Activated naive CD4-positive, alpha-beta T cell treated with anti-CD3 and anti-CD28 coated beads for 36 hours (primary cell): ENCODE measurements at regions of chr11 and their contacts with region 1.

Region 1: DNA sequence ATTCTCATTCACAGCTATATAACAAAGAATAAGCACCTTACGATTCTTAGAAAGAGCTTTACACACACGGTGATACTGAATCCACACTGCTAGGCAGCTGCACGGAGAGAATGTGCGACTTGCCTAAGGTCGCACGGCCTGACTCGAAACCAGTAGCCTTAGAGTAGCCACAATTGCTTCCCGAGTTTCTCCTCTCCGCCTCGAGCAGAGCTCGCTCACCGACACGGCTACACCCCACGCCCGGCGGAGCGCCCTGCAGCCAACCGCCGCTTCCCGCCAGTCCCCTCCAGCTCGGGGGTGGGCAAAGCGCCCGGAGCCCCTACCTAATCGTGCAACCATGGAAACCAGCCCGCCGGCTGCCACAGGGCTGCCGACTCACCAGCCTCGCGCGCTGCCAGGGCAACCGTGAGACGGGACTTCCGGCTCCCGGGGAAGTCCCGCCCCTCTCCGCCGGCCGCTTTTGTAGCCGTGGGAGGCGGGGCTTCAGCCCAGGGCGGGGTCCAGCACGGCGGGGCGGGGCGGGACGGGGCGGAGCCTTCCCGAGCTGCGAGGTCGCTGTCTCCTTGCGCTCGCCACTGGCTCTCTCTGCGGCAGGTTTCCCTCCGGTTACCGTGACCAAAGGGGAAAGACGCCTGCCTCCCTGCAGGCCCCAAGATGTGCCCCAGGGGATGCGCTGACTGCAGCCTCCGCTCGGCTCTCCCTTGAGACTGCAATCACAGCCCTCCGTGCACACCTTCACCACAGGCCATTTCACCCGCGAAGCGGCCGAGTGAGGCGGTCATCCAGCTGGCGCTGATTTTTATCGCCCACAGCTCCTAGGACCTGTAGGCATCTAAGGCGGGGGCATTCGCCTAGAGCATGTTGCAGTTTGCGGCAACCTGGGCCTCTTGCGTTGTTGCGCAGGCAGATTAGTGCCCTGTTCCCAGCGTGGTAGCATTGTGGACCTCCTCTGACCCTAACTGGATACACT is 1.1 kb downstream of the BSCL2 start:
- DNase-seq: peak; percentile 95
- H3K4me3 Mint-ChIP-seq: peak overlapping the region; percentile 88
- H3K27ac Mint-ChIP-seq: peak overlapping the region; percentile 24
- H3K4me1 Mint-ChIP-seq: peaks cover 40% of the 10 kb centered on the region
- H3K27me3 Mint-ChIP-seq: no peaks in the 10 kb centered on the region

Region 2: DNA sequence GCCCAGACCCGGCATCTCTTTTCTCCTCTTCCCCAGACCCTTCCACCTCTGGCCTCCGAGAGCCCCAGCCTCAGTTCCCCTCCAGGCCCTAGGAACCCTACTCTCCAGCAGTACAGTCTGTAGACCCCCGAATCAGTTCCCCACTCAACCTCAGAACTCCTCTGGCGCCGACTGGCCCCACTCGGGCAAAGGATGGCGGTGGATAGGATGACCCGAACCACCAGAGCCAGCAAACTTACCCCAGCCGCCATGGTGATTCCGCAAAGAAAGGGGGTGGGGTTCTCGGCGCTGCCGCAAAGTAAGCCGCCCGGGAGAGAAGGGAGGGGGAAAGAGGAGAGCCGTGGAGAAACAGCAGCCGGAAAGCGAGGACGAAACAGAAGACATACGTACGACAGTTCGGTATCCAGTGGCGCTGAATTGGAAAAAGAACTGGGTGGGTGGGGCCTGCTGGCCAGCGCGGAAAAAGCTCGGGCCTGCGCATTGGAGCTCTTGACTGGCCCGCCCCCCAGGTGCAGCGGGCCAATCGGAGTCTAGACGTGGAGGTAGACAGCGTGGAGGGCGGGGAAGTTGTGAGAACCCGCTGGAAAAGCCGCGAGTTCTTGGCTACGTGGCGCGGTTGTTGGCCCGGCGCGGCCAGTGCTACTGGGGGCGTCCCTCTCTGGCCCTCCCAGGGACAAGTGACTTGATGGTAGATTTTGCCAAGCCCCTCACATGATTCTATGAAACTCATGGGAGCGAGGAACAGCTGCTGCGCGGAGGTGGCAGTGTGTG is 132.4 kb before region 1 on chr11 and contains the start of gene EEF1G:
- CTCF ChIA-PET with region 1: no interaction called
- intact Hi-C with region 1: loop called (anchors 1 kb)
- DNase-seq: peak; percentile 99
- H3K4me3 Mint-ChIP-seq: peak within 1 kb of the TSS; percentile 95
- H3K27ac Mint-ChIP-seq: peak within 1 kb of the TSS; percentile 97
- H3K4me1 Mint-ChIP-seq: peaks cover 44% of the 10 kb centered on the region
- H3K27me3 Mint-ChIP-seq: no peaks in the 10 kb centered on the region
- total RNA-seq, gene EEF1G: 2,282 to 2,440 TPM

Region 3: GRCh38 chr11:62665075-62665598 is 41.0 kb before region 1 on chr11 and contains the starts of genes C11orf98 and CSKMT:
- CTCF ChIA-PET with region 1: interaction called, 5 read pairs
- intact Hi-C with region 1: loop called (anchors 2 kb)
- DNase-seq: peak; percentile 96
- H3K4me3 Mint-ChIP-seq: peak within 1 kb of the TSS; percentile 98
- H3K27ac Mint-ChIP-seq: peak within 1 kb of the TSS; percentile 88
- H3K4me1 Mint-ChIP-seq: peaks cover 42% of the 10 kb centered on the region
- H3K27me3 Mint-ChIP-seq: no peaks in the 10 kb centered on the region
- total RNA-seq, gene C11orf98: 73.5 to 76.5 TPM
- total RNA-seq, gene CSKMT: 35.2 to 44.0 TPM

Region 4: DNA sequence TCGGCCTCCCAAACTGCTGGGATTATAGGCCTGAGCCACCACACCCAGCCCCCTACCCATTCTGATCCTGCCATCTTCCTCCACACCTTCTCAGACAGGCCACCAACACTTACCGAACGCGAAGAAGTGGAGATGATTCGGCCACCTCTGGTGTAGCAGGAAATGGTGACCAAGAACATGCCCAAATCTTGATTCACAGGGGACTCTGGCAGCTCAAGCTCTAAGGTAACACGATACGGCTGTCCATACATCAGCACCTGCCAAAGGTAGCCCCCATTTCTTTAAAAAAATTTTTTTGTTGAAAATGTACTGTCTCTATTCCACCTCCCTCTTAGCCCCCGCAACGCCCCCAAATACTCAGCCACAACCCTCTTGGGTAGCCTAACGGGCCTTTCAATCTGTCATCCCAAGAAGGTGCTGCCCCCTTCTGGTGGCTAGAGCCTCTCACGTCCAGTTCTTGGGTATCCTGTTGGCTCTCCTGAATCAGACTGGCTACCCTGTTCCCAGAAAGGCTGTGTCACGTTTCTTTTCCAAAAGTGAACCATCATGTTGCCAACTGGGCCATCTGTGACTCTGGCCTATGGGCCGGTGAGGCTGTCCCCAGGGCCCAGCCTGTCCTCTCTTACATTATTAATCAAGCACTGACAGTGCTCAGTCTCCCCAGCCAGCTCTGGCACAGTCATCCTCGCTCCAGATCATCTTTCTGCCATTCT is 11.6 kb before region 1 on chr11:
- CTCF ChIA-PET with region 1: interaction called, 25 read pairs
- intact Hi-C with region 1: no loop called
- DNase-seq: peak; percentile 85
- H3K4me3 Mint-ChIP-seq: no peak overlapping the region
- H3K27ac Mint-ChIP-seq: peak overlapping the region; percentile 4
- H3K4me1 Mint-ChIP-seq: no peaks in the 10 kb centered on the region
- H3K27me3 Mint-ChIP-seq: no peaks in the 10 kb centered on the region

Region 5: GRCh38 chr11:62771144-62772021 is 65.2 kb after region 1 on chr11 and contains the start of gene TAF6L:
- CTCF ChIA-PET with region 1: interaction called, 3 read pairs
- intact Hi-C with region 1: loop called (anchors 1 kb)
- DNase-seq: peak; percentile 95
- H3K4me3 Mint-ChIP-seq: peak within 1 kb of the TSS; percentile 80
- H3K27ac Mint-ChIP-seq: peak within 1 kb of the TSS; percentile 91
- H3K4me1 Mint-ChIP-seq: peaks cover 25% of the 10 kb centered on the region
- H3K27me3 Mint-ChIP-seq: no peaks in the 10 kb centered on the region
- total RNA-seq, gene TAF6L: 8.9 to 10.5 TPM